Naive thymus-derived CD4-positive, alpha-beta T cell (primary cell): ENCODE measurements at regions of chr12 and their contacts with region 1.

Region 1: DNA sequence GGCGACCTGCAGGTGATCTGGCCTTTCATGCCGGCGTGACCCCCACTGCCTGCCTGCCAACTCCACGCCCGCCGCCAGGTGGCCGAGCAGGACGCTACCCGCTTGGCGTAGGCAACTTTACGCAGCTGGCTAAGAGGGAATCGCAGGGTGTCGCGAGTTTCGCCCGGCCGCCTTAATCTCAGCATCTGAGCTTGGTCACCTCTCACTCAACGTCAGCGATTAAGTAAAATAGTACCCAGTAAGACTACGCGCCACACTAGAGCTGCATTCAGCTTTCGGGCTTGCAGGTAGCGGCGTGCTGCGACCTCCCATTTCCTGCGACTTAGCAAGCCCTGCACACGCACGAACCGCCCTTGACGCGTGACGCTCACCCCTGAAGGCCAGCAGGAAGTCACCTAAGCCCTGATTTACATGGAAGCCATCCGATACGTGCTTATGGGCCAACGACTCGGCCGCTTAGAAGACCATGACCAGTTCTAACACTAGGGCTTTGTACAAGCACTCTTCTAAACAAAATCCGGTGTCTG is 33.2 kb downstream of the WBP11 start:
- DNase-seq: peak; percentile 79 to 89 (median 87)
- ATAC-seq: peak; percentile 66
- H3K4me3 ChIP-seq: peak overlapping the region; percentile 89
- H3K4me3 Mint-ChIP-seq: peak overlapping the region; percentile 91 to 100 (median 98)
- H3K27ac ChIP-seq: peak overlapping the region; percentile 96
- H3K27ac Mint-ChIP-seq: peak overlapping the region; percentile 98 to 100 (median 100)
- H3K4me1 ChIP-seq: peaks cover 11 to 28% of the 10 kb centered on the region in 2 donors
- H3K4me1 Mint-ChIP-seq: peaks cover 29 to 76% (median 57%) of the 10 kb centered on the region in 7 donors
- H3K27me3 ChIP-seq: no peaks in the 10 kb centered on the region
- H3K27me3 Mint-ChIP-seq: peaks cover 0 to 6% (median 0%) of the 10 kb centered on the region in 5 donors

Region 2: GRCh38 chr12:12813120-12814101 is 1956.6 kb before region 1 on chr12 and contains the start of gene DDX47:
- CTCF ChIA-PET with region 1: no interaction called
- POLR2A ChIA-PET with region 1: no interaction called
- intact Hi-C with region 1: loop called (anchors 10 kb)
- DNase-seq: peak; percentile 91 to 99 (median 96)
- ATAC-seq: peak; percentile 97
- H3K4me3 ChIP-seq: peak within 1 kb of the TSS; percentile 96
- H3K4me3 Mint-ChIP-seq: peak within 1 kb of the TSS; percentile 89 to 99 (median 96)
- H3K27ac ChIP-seq: peak within 1 kb of the TSS; percentile 99
- H3K27ac Mint-ChIP-seq: peak within 1 kb of the TSS; percentile 84 to 99 (median 97)
- H3K4me1 ChIP-seq: peaks cover 28 to 41% of the 10 kb centered on the region in 2 donors
- H3K4me1 Mint-ChIP-seq: peaks cover 36 to 84% (median 69%) of the 10 kb centered on the region in 7 donors
- H3K27me3 ChIP-seq: no peaks in the 10 kb centered on the region
- H3K27me3 Mint-ChIP-seq: no peaks in the 10 kb centered on the region
- total RNA-seq, gene DDX47: 71.6 to 154 (median 75.5) TPM

Region 3: DNA sequence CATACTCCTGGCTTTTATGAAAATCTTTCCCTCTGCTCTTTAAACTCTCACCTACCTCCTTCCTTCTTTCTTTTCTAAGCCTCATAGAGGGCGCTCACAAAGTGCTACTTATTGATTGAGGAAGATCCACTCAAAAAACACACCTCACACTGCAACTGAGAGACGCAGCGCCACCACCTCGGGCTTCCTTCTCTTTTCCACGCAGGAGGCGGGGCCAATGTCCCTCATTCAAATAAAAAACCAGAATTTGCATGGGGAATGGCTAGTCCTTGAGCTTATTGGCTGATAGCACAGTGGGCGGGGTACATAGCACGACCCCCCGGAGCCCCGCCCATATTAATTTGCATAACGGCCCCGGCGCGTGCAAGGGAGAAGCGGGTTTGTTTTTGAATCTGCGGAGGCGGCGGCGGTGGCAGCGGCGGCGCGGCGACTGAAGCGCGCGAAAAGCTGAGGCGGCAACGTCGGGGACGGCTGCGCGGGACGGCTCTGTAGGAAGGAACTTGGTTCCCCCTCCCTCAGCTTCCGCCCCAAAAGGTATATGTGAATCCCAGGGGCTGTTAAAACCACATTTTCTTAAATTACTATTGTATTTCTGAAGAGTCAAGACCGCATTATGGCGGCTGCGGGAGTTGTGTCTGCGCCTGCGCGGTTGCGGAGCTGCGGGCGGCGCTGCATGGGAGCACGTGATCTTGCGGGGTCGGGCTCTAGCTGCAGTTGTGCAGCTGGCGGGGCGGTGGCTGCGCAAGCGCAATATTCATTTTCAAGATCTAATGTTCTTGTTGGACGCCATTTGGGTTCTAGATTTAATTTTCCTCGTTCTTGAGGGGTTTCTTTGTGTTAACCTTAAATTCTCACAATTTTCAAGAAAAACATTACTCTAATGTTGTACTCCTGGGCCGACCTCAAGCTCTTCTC is 404.5 kb before region 1 on chr12 and contains the start of gene ATF7IP:
- CTCF ChIA-PET with region 1: interaction called, 3 read pairs
- POLR2A ChIA-PET with region 1: interaction called, 43 read pairs
- intact Hi-C with region 1: loop called (anchors 1 to 2 kb)
- DNase-seq: peak; percentile 91 to 98 (median 97)
- ATAC-seq: peak; percentile 93
- H3K4me3 ChIP-seq: peak within 1 kb of the TSS; percentile 83
- H3K4me3 Mint-ChIP-seq: peak within 1 kb of the TSS; percentile 78 to 97 (median 88)
- H3K27ac ChIP-seq: peak within 1 kb of the TSS; percentile 84
- H3K27ac Mint-ChIP-seq: peak within 1 kb of the TSS; percentile 88 to 98 (median 94)
- H3K4me1 ChIP-seq: peaks cover 13 to 20% of the 10 kb centered on the region in 2 donors
- H3K4me1 Mint-ChIP-seq: peaks cover 21 to 52% (median 34%) of the 10 kb centered on the region in 7 donors
- H3K27me3 ChIP-seq: no peaks in the 10 kb centered on the region
- H3K27me3 Mint-ChIP-seq: peaks cover 0 to 2% (median 0%) of the 10 kb centered on the region in 5 donors
- total RNA-seq, gene ATF7IP: 113 to 181 (median 144) TPM

Region 4: DNA sequence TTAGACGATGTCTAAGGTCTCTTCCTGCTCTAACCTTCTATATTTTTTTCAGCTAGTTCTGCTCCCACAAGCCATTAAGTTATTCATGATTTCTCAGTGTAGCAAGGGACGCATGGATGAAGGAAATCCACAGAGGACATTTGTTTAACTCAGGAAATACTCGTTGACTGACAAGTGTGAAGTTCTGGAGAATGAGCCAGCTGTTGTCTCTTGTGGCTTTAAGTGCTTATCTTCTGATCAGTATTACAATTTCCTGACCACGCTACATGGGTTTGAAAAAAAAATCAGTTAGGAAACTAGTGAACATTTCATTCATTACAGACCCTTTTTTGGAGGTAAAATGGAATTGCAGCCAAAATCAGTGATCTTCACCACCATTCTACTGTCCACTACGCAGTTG is 126.8 kb before region 1 on chr12:
- CTCF ChIA-PET with region 1: no interaction called
- POLR2A ChIA-PET with region 1: no interaction called
- intact Hi-C with region 1: loop called (anchors 1 to 2 kb)
- DNase-seq: peak in 6 of 9 donors; percentile 29 to 52 (median 42)
- ATAC-seq: peak; percentile 46
- H3K4me3 ChIP-seq: no peak overlapping the region
- H3K4me3 Mint-ChIP-seq: peak overlapping the region; percentile 35 to 79 (median 71)
- H3K27ac ChIP-seq: no peak overlapping the region
- H3K27ac Mint-ChIP-seq: peak overlapping the region; percentile 8 to 83 (median 54)
- H3K4me1 ChIP-seq: peaks cover 14 to 21% of the 10 kb centered on the region in 2 donors
- H3K4me1 Mint-ChIP-seq: peaks cover 15 to 26% (median 24%) of the 10 kb centered on the region in 7 donors
- H3K27me3 ChIP-seq: no peaks in the 10 kb centered on the region
- H3K27me3 Mint-ChIP-seq: peaks cover 0 to 9% (median 0%) of the 10 kb centered on the region in 5 donors

Region 5: DNA sequence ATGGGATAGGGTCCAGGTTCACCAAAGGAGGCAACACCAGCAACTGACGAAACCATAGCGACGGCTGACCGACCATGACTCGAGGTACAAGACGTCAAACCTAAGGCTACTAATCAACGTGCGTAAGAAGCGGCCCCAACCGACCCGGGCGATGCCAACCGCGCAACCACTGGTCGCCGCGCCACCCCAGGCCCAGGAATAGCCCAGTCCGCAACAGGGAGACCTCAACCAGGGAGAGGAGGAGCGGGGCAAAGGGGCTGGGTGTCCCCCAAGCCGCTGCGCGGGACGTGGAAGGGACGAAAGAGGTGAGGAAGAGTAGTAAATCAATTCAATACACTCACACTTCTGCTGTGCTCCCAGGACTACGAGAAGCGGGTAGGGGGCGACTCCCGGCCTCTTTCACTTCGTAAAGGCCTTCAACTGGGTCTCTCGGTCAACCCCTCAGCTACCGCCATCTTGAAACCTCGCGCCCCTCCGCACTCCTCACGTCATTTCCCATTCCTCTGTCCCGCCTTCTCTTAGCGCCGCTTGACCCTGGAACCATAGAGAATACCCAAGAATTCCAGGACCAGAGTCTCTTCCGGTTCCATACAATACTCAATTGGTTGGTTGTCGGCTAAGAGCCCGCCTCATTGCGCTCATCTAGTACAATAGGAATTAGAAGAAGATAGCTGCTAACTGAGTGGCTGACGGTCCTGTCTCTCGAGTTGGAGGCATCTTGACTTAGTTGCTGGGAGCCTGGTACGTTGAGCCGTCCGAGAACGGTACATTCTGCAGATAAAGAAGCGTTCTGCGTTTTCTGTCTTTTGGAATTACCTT is 33.2 kb after region 1 on chr12 and contains the starts of genes C12orf60 and WBP11:
- CTCF ChIA-PET with region 1: interaction called, 22 read pairs
- POLR2A ChIA-PET with region 1: interaction called, 316 read pairs
- intact Hi-C with region 1: loop called (anchors 1 kb)
- DNase-seq: peak; percentile 56 to 95 (median 91)
- ATAC-seq: peak; percentile 98
- H3K4me3 ChIP-seq: peak within 1 kb of the TSS; percentile 80
- H3K4me3 Mint-ChIP-seq: no peak within 1 kb of the TSS
- H3K27ac ChIP-seq: peak within 1 kb of the TSS; percentile 97
- H3K27ac Mint-ChIP-seq: no peak within 1 kb of the TSS
- H3K4me1 ChIP-seq: peaks cover 14 to 19% of the 10 kb centered on the region in 2 donors
- H3K4me1 Mint-ChIP-seq: peaks cover 0 to 26% (median 10%) of the 10 kb centered on the region in 7 donors
- H3K27me3 ChIP-seq: no peaks in the 10 kb centered on the region
- H3K27me3 Mint-ChIP-seq: no peaks in the 10 kb centered on the region
- total RNA-seq, gene C12orf60: 0.22 to 1.7 (median 1.2) TPM in 4 of 5 experiments, not detected in the other
- total RNA-seq, gene WBP11: 77.9 to 129 (median 90.4) TPM

Region 6: GRCh38 chr12:14960548-14961465 is 190.8 kb after region 1 on chr12:
- CTCF ChIA-PET with region 1: no interaction called
- POLR2A ChIA-PET with region 1: interaction called, 57 read pairs
- intact Hi-C with region 1: loop called (anchors 1 kb)
- DNase-seq: peak in 7 of 9 donors; percentile 41 to 82 (median 77)
- ATAC-seq: peak; percentile 54
- H3K4me3 ChIP-seq: peak overlapping the region; percentile 84
- H3K4me3 Mint-ChIP-seq: peak overlapping the region; percentile 88 to 100 (median 97)
- H3K27ac ChIP-seq: peak overlapping the region; percentile 96
- H3K27ac Mint-ChIP-seq: peak overlapping the region; percentile 94 to 100 (median 97)
- H3K4me1 ChIP-seq: peaks cover 42 to 50% of the 10 kb centered on the region in 2 donors
- H3K4me1 Mint-ChIP-seq: peaks cover 42 to 68% (median 61%) of the 10 kb centered on the region in 7 donors
- H3K27me3 ChIP-seq: no peaks in the 10 kb centered on the region
- H3K27me3 Mint-ChIP-seq: peaks cover 0 to 2% (median 0%) of the 10 kb centered on the region in 5 donors

Region 7: DNA sequence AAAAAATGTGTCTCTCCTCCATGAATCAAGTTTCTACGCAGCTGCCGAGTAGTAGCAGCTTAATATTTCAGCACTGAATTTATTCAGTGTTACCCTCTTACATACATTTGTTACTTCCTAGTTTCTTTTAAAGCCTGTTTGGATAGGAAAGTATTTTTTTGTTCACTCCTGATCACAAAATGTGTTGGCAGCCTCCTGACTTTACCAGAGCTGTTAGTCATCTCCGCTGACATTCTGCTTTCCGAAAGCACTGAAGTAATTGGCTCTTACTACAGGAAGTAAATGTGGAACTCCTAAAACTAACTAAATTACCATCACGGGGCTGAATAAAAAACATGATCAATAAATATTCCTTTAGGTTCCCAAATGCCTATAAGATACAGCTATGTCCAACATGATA is 793.6 kb after region 1 on chr12:
- CTCF ChIA-PET with region 1: interaction called, 5 read pairs
- POLR2A ChIA-PET with region 1: interaction called, 6 read pairs
- intact Hi-C with region 1: loop called (anchors 1 to 5 kb)
- DNase-seq: peak in 6 of 9 donors; percentile 39 to 54 (median 50)
- ATAC-seq: peak; percentile 84
- H3K4me3 ChIP-seq: peak overlapping the region; percentile 38
- H3K4me3 Mint-ChIP-seq: peak overlapping the region; percentile 54 to 87 (median 82)
- H3K27ac ChIP-seq: peak overlapping the region; percentile 82
- H3K27ac Mint-ChIP-seq: peak overlapping the region; percentile 87 to 96 (median 94)
- H3K4me1 ChIP-seq: peaks cover 0 to 37% of the 10 kb centered on the region in 2 donors
- H3K4me1 Mint-ChIP-seq: peaks cover 36 to 89% (median 77%) of the 10 kb centered on the region in 7 donors
- H3K27me3 ChIP-seq: no peaks in the 10 kb centered on the region
- H3K27me3 Mint-ChIP-seq: peaks cover 0 to 5% (median 0%) of the 10 kb centered on the region in 5 donors